ENCODE measurements at regions of chr9 and their contacts with region 1.

Region 1: GRCh38 chr9:90240541-90240940 is 402.1 kb downstream of the DIRAS2 start:
- DNase-seq: no peak
- ATAC-seq: no peak
- H3K4me3 ChIP-seq: no peak overlapping the region
- H3K4me3 Mint-ChIP-seq: no peak overlapping the region
- H3K27ac ChIP-seq: no peak overlapping the region
- H3K27ac Mint-ChIP-seq: no peak overlapping the region
- H3K4me1 ChIP-seq: no peaks in the 10 kb centered on the region
- H3K4me1 Mint-ChIP-seq: no peaks in the 10 kb centered on the region
- H3K27me3 ChIP-seq: no peaks in the 10 kb centered on the region
- H3K27me3 Mint-ChIP-seq: peaks cover 0 to 14% (median 0%) of the 10 kb centered on the region in 5 donors

Region 2: DNA sequence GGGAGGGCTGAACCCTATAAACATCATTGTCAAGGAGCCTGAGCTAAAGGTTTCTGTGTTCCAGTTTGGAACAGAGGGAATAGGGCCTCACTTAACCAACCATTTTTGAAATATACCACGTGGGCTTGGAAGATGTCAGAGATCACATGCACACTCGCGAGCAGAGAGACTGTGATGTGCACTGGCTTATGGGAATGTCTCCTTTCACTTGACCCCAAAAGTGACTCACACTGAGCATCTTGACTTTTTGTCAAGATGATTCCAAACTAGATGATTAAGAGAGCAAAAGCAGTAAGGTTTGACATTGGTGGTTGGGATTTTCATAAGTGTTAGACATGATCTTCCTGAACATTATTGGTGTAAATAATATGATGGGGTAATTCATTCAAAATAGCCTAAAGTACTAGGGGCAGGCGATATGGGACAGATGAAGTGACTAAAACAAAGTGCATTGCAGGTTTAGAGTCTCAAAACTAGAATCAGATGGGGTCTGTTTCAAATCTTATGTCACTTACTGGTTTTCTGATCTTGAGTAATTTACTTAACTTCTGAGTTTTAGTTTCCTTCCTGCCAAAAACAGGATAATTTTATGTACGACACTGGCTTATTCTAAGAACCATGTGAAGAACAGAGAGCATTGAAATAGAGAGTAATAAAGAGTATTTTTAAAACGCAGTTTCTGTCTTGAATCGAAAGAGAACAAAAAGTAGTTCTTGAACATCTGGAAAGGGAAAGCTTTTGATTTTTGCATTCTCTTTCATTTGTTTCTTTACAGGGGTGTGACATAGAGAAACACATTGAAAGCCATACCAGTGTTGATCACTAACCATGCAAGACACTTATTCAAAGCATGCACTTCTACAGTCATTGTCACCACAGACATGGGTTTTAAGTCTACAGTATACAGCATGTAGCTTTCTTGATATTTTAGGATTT is 19.0 kb after region 1 on chr9:
- CTCF ChIA-PET with region 1: no interaction called
- POLR2A ChIA-PET with region 1: no interaction called
- intact Hi-C with region 1: no loop called
- DNase-seq: no peak
- ATAC-seq: no peak
- H3K4me3 ChIP-seq: no peak overlapping the region
- H3K4me3 Mint-ChIP-seq: no peak overlapping the region
- H3K27ac ChIP-seq: no peak overlapping the region
- H3K27ac Mint-ChIP-seq: no peak overlapping the region
- H3K4me1 ChIP-seq: no peaks in the 10 kb centered on the region
- H3K4me1 Mint-ChIP-seq: peaks cover 0 to 2% (median 0%) of the 10 kb centered on the region in 7 donors
- H3K27me3 ChIP-seq: no peaks in the 10 kb centered on the region
- H3K27me3 Mint-ChIP-seq: peaks cover 10 to 22% (median 19%) of the 10 kb centered on the region in 5 donors

Region 3: GRCh38 chr9:90860826-90861225 is 620.3 kb after region 1 on chr9:
- CTCF ChIA-PET with region 1: no interaction called
- POLR2A ChIA-PET with region 1: no interaction called
- intact Hi-C with region 1: loop called in 1 of 2 experiments (anchors 5 kb)
- DNase-seq: no peak
- ATAC-seq: peak; percentile 79
- H3K4me3 ChIP-seq: no peak overlapping the region
- H3K4me3 Mint-ChIP-seq: no peak overlapping the region
- H3K27ac ChIP-seq: no peak overlapping the region
- H3K27ac Mint-ChIP-seq: no peak overlapping the region
- H3K4me1 ChIP-seq: peaks cover 0 to 13% of the 10 kb centered on the region in 2 donors
- H3K4me1 Mint-ChIP-seq: peaks cover 11 to 44% (median 26%) of the 10 kb centered on the region in 7 donors
- H3K27me3 ChIP-seq: no peaks in the 10 kb centered on the region
- H3K27me3 Mint-ChIP-seq: peaks cover 0 to 21% (median 6%) of the 10 kb centered on the region in 5 donors

Measured in naive thymus-derived CD4-positive, alpha-beta T cell (primary cell).